ENCODE measurements at regions of chr3 and their contacts with region 1.

Region 1: GRCh38 chr3:123096731-123097130 is 29.9 kb downstream of the PDIA5 start:
- DNase-seq: peak; percentile 94
- H3K4me3 ChIP-seq: no peak overlapping the region
- H3K27ac ChIP-seq: peak overlapping the region; percentile 48 to 80 (median 74)
- H3K4me1 ChIP-seq: peaks cover 0 to 53% (median 44%) of the 10 kb centered on the region in 4 donors
- H3K27me3 ChIP-seq: no peaks in the 10 kb centered on the region
- CTCF ChIP-seq: no peak
- EP300 ChIP-seq: no peak
- POLR2A ChIP-seq: no peak

Region 2: GRCh38 chr3:122974764-122975162 is 122.0 kb before region 1 on chr3:
- intact Hi-C with region 1: loop called (anchors 5 kb)
- DNase-seq: peak; percentile 75
- H3K4me3 ChIP-seq: no peak overlapping the region
- H3K27ac ChIP-seq: peak overlapping the region; percentile 31 to 80 (median 63)
- H3K4me1 ChIP-seq: peaks cover 0 to 45% (median 35%) of the 10 kb centered on the region in 4 donors
- H3K27me3 ChIP-seq: no peaks in the 10 kb centered on the region
- CTCF ChIP-seq: no peak
- EP300 ChIP-seq: no peak
- POLR2A ChIP-seq: no peak